RWPE1 (cell line): ENCODE measurements at regions of chr10 and their contacts with region 1.

Region 1: DNA sequence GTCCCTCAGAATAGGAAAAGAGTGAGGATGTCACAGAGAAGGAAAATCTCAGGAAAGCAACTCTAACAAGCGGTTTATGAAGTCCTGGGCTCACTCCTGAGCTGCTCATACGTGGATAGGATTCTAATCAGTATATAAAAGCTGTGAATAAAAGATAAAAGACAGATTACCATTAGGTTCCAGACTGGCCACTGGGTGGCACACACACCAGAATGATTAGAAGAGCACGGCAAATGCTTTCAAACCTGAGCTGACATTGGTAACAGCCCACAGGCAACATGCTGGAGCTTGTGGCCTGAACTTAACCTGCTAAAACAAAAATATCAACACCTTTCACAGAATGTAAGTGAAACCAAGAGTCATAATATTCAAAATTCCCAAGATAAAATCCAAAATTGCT is 370.8 kb downstream of the GRID1 start:
- DNase-seq: peak; percentile 59
- H3K27ac ChIP-seq: no peak overlapping the region
- CTCF ChIP-seq: 0 out of 2 replicates have a peak, but pooled peaks have one; percentile 37

Region 2: GRCh38 chr10:85864173-85864549 is 131.6 kb before region 1 on chr10:
- CTCF ChIA-PET with region 1: no interaction called
- POLR2A ChIA-PET with region 1: no interaction called
- DNase-seq: no peak
- H3K27ac ChIP-seq: no peak overlapping the region
- CTCF ChIP-seq: no peak

Region 3: DNA sequence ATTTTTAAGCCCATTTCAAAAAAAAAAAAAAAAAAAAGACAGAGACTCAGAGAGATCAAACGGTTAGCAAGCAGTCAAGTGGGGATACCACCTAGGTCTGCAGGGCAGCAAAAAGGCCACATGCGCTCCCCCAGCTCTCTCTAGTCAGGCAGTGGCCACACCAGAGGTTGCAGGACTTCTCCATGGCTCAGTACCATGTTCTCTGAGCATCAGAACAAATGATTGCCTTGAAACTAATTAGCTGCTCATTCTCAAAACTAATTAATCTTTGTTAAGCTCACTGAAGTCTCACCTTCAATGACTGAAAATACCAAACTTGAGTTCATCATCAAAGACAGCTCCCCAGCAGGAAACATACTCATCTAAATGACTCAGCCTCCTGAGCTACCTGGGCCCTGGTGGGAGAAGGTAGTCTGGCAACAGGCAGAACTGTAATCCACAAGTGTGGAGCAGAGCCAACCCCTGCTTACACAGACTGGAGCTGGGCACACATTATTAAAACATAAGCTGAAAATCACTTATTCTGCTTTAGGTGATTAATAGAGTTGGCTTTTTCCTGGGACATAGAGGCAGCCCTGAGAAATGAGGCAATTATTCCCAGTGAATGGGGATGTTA is 51.2 kb after region 1 on chr10:
- CTCF ChIA-PET with region 1: no interaction called
- POLR2A ChIA-PET with region 1: no interaction called
- DNase-seq: peak; percentile 15
- H3K27ac ChIP-seq: no peak overlapping the region
- CTCF ChIP-seq: no peak

Region 4: DNA sequence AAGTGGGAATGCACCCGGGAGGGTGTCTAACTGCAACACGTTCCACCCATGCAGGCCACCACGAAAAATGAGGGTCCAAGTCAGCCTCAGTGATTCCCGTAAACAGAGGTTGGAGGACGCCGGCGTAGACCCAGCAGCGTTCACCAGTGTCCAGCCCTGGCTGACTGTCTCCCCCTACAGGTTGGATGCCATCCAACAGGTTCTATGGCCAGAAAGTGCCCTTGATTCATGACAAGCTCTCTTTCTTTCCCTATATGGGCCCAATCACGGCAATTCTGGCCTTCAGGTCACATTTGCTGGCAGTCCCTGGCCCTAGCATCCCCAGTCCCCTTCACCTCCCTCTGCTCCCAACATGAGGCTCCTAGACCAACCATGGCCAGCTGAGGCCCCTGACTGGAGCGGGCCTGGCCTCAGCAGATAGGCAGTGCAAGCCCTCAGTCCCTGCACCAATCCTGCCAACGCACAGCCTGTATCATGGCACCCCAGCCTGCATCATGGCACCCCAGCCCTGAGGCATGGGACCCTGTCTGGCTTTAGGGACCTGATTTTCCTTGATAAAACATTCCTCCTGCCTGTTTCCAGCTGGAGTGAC is 143.4 kb after region 1 on chr10:
- CTCF ChIA-PET with region 1: interaction called, 11 read pairs
- POLR2A ChIA-PET with region 1: no interaction called
- DNase-seq: peak; percentile 32
- H3K27ac ChIP-seq: no peak overlapping the region
- CTCF ChIP-seq: peak; percentile 21; the same call in 1 of the 2 replicates

Region 5: GRCh38 chr10:86376852-86377796 is 381.3 kb after region 1 on chr10:
- CTCF ChIA-PET with region 1: interaction called, 10 read pairs
- POLR2A ChIA-PET with region 1: no interaction called
- DNase-seq: peak; percentile 83
- H3K27ac ChIP-seq: no peak overlapping the region
- CTCF ChIP-seq: peak; percentile 98